HAP-1 (cell line): ENCODE measurements at regions of chr2 and their contacts with region 1.

Region 1: GRCh38 chr2:237154082-237154638 is 68.5 kb downstream of the COPS8 start:
- DNase-seq: peak; percentile 28 to 55
- H3K4me3 ChIP-seq: no peak overlapping the region
- H3K4me1 ChIP-seq: no peaks in the 10 kb centered on the region
- H3K27me3 ChIP-seq: peaks cover 8% of the 10 kb centered on the region

Region 2: GRCh38 chr2:237408335-237409000 is 254.3 kb after region 1 on chr2:
- in situ Hi-C with region 1: loop called (anchors 10 kb)
- DNase-seq: no peak
- H3K4me3 ChIP-seq: no peak overlapping the region
- H3K4me1 ChIP-seq: no peaks in the 10 kb centered on the region
- H3K27me3 ChIP-seq: peaks cover 43% of the 10 kb centered on the region

Region 3: DNA sequence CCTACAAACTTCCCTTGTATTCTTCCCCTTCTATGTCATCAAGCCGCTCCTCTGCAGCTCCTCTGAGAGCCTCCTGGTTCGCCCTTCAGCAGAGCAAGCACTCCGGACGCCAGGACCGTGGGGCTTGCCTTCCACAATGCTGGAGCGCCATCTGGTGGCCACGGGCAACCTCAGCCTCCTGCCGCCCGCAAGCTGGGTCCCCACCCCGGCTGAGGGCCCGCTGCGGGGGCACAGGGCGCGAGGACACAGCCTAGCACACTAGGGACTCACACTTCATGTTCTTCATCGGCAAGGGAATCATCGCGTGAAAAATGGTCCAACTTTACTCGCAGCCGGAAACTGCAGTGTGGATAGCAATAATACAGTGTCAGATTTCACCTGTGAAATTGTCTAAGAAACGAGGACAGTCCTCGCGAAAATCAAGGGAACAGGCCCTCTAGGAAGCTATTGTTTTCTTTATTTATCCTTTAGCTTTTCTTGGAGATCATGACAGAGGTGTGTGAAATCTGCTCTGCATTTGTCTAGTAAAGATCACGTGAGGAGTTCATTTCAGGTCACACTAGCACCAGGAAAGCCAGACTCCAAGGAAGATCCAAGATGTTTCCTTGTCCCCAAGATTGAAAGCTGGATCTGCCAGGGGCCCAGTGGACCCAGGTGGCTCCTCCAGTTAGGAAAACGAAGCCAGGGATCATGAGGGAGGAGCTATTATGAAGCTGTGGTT is 418.0 kb after region 1 on chr2:
- in situ Hi-C with region 1: loop called (anchors 10 kb)
- DNase-seq: peak; percentile 77 to 94
- H3K4me3 ChIP-seq: no peak overlapping the region
- H3K4me1 ChIP-seq: no peaks in the 10 kb centered on the region
- H3K27me3 ChIP-seq: no peaks in the 10 kb centered on the region